ENCODE measurements at regions of chr2 and their contacts with region 1.

Region 1: GRCh38 chr2:25590921-25591505 is 82.4 kb downstream of the DTNB start:
- DNase-seq: no peak
- H3K4me3 ChIP-seq: no peak overlapping the region
- H3K27ac ChIP-seq: no peak overlapping the region
- H3K4me1 ChIP-seq: peaks cover 6% of the 10 kb centered on the region
- H3K27me3 ChIP-seq: no peaks in the 10 kb centered on the region
- CTCF ChIP-seq: no peak
- EP300 ChIP-seq: no peak
- POLR2A ChIP-seq: no peak

Region 2: DNA sequence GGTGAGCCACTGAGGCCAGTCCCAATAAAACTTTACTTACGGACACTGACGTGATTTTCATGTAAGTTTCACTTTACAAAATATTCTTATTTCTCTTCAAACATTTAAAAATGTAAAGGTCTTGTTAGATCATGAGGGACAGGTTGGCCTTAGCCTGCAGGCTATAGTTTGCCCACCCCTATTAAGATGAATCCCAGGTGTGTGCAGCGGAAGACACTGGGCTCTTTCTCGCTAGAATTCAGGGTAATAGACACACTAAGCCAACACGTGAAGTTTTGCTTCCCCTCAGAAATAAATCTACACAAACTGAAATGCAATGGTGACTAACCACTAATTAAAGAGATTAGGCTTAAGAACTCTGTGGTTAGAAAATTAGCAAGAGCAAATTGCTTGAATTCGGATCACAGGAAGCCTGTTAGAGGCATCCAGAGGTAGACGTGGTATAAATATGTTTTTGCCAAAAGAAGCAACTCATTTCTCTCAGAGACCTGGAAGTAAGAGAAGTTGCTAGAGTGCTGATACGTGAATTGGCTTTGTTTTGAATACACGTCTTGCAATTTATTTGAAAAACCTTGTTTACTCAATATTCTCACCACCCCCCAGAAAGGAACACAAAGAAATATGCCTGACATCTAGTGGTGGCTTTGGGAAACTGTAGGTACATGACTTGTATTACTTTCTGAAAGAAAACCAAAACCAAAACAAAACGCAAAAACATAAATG is 69.2 kb before region 1 on chr2:
- intact Hi-C with region 1: no loop called
- DNase-seq: no peak
- H3K4me3 ChIP-seq: peak overlapping the region; percentile 26
- H3K27ac ChIP-seq: no peak overlapping the region
- H3K4me1 ChIP-seq: peaks cover 2% of the 10 kb centered on the region
- H3K27me3 ChIP-seq: no peaks in the 10 kb centered on the region
- CTCF ChIP-seq: peak; percentile 62 to 88 (median 84)
- EP300 ChIP-seq: no peak
- POLR2A ChIP-seq: no peak

Region 3: GRCh38 chr2:25673300-25674076 is 82.5 kb after region 1 on chr2 and contains the start of gene DTNB:
- intact Hi-C with region 1: loop called in 1 of 4 experiments (anchors 10 kb)
- DNase-seq: peak; percentile 80 to 89 (median 88)
- H3K4me3 ChIP-seq: peak within 1 kb of the TSS; percentile 84
- H3K27ac ChIP-seq: peak within 1 kb of the TSS; percentile 37 to 92
- H3K4me1 ChIP-seq: no peaks in the 10 kb centered on the region
- H3K27me3 ChIP-seq: no peaks in the 10 kb centered on the region
- CTCF ChIP-seq: no peak
- EP300 ChIP-seq: peak; percentile 22
- POLR2A ChIP-seq: peak; percentile 33
- total RNA-seq, gene DTNB: 9.4 to 24.9 (median 17.6) TPM

Region 4: DNA sequence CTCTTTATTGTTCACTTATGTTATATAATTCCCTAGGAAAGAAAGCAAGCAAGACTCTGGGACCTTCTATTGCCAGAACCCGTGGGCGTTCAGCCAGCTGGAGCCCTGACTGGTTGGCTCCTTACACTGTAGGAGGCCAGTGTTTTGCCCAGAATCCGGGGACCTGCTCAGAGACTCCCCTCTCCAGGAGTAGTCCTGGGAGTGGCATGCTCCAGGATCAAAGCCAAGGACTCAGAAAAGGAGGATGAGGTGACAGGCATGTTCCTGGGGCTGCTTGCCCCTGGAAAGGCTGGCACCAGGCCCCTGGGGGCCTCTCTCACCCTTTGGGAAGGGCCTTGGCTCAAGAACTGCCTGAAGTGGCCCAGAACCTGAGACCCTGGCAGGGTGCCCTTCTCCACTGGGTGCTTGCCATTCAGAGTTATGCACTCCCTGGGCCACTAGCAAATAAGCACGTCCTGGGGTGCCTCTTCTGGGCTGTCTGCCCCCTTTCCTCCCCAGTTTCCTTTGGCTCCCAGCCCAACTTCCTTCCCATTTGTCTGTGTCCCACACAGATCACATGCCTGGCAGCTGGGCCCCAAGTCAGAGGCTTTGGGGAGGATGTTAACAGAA is 410.8 kb after region 1 on chr2:
- intact Hi-C with region 1: no loop called
- DNase-seq: peak; percentile 59 to 84 (median 69)
- H3K4me3 ChIP-seq: no peak overlapping the region
- H3K27ac ChIP-seq: peak overlapping the region in 1 of 2 donors; percentile 23
- H3K4me1 ChIP-seq: peaks cover 9% of the 10 kb centered on the region
- H3K27me3 ChIP-seq: no peaks in the 10 kb centered on the region
- CTCF ChIP-seq: no peak
- EP300 ChIP-seq: no peak
- POLR2A ChIP-seq: no peak